ENCODE measurements at regions of chr11 and their contacts with region 1.

Region 1: DNA sequence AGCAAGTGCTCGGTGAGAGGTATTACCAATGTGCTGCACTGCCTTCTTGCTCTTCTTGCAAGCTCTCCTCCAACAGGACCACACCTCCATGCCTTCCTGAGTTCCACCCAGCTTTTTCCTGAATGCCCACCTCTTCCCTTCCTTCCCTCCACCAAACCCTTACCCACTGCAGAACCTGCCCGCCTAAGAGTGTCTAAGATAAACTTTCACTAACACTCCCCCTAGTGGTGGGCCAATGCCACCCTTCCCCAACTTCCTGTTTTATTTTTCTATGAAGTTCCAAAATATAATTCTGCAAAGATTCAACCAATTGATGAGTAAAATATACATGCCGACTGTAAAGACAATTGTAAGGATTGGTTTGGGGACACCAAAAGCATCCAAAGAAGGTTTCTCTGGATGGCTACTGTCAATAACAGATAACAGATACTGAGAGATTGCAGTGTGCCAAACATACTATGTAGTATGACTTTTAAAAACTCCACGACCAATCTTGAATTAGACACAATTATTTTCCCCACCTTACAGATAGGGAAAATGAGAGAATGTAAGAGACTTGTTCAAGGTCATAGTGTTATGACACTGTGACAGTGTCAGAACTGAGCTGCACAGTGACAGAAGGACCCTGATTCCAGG is 38.6 kb upstream of the BMAL1 start:
- DNase-seq: no peak
- ATAC-seq: peak; percentile 47
- H3K4me3 Mint-ChIP-seq: no peak overlapping the region
- H3K27ac Mint-ChIP-seq: no peak overlapping the region
- H3K4me1 Mint-ChIP-seq: no peaks in the 10 kb centered on the region
- H3K27me3 Mint-ChIP-seq: peaks cover 5% of the 10 kb centered on the region
- CTCF ChIP-seq: no peak

Region 2: GRCh38 chr11:12680246-12680939 is 558.6 kb before region 1 on chr11:
- CTCF ChIA-PET with region 1: no interaction called
- POLR2A ChIA-PET with region 1: no interaction called
- intact Hi-C with region 1: no loop called
- DNase-seq: no peak
- ATAC-seq: no peak
- H3K4me3 Mint-ChIP-seq: no peak overlapping the region
- H3K27ac Mint-ChIP-seq: no peak overlapping the region
- H3K4me1 Mint-ChIP-seq: peaks cover 4% of the 10 kb centered on the region
- H3K27me3 Mint-ChIP-seq: peaks cover 62% of the 10 kb centered on the region
- CTCF ChIP-seq: no peak

Region 3: DNA sequence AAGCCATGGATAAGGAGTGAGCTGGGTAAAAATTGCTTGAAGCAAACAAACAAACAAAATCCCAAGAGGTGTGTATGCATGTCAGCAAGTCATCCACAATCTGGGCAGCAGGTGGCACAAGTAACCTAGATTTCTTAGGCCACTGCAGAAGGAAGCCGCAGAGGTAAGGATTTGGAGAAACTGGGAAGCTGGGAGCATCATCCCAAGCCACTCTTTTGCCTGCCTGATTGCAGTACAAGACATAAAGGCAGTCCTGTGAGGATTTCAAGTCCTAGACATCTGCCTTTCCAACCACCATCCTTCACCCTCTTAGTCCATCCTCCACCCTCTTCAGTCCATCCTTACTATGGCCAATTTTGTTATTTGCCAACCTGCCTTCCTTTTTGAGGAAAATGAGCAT is 28.6 kb before region 1 on chr11:
- CTCF ChIA-PET with region 1: interaction called, 7 read pairs
- POLR2A ChIA-PET with region 1: no interaction called
- intact Hi-C with region 1: loop called (anchors 2 kb)
- DNase-seq: no peak
- ATAC-seq: no peak
- H3K4me3 Mint-ChIP-seq: no peak overlapping the region
- H3K27ac Mint-ChIP-seq: no peak overlapping the region
- H3K4me1 Mint-ChIP-seq: peaks cover 12% of the 10 kb centered on the region
- H3K27me3 Mint-ChIP-seq: peaks cover 20% of the 10 kb centered on the region
- CTCF ChIP-seq: no peak

Region 4: DNA sequence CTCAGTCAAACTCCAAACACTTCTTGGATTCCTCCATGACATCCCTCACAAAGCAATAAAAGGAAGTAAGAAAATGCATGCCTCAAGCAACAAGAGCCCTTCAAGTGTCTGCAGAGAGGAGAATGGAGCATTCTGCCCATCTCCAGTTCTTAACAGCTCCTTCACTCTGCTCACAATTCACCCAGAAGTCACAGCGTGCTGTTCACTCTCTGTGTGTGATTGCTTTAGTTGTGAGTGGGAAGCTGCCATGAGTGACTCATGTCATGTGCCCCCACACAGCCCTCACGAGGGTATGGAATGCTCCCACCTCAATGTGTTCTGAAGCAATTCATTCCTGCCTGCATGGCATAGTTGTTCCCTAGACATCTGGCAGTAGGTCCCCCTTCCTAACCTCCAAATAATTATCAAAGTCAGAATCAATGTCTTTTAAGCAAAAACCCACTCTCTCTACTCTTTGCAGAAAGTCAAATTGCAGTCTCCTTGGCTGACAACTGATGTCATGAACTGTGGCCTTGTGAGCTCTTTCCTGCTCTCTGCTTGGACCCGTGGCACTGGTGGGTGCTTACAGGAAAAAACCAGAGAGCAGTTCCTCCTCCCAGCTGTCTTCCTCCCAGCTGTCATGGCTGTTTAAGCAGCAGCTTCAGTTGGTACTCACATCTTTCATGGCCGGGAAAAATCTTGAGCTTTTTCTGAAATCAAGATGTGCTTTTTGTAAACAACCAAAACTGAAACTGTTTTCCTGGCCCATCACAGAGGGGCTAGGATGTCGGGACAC is 611.4 kb after region 1 on chr11:
- CTCF ChIA-PET with region 1: no interaction called
- POLR2A ChIA-PET with region 1: no interaction called
- intact Hi-C with region 1: no loop called
- DNase-seq: no peak
- ATAC-seq: no peak
- H3K4me3 Mint-ChIP-seq: no peak overlapping the region
- H3K27ac Mint-ChIP-seq: no peak overlapping the region
- H3K4me1 Mint-ChIP-seq: peaks cover 8% of the 10 kb centered on the region
- H3K27me3 Mint-ChIP-seq: peaks cover 22% of the 10 kb centered on the region
- CTCF ChIP-seq: no peak

Measured in activated B cell treated with CpG ODN at 0.5 μM for 24 hours (primary cell).